ENCODE measurements at regions of chr3 and their contacts with region 1.

Region 1: DNA sequence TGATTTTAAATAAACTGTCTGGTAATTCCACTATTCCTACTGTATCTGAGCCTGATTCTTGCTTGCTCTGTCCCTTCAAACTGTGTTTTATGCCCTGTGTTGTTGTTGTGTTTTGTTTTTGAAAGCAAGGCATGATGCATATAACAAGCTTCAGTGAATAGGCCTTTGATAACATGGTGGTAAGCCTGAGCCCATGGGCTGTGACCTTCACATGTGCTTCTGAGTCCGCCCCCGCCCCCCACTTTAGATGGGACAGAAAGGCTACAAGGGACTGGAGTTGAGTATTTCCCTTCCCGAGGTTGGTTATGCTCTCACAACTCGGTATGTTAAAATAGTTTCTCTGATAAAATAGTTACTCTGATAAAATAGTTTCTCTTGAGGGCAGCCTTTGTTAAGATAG is 119.0 kb upstream of the WNT7A start:
- DNase-seq: no peak
- H3K4me3 ChIP-seq: no peak overlapping the region
- H3K27ac ChIP-seq: no peak overlapping the region
- H3K4me1 ChIP-seq: no peaks in the 10 kb centered on the region
- CTCF ChIP-seq: no peak

Region 2: DNA sequence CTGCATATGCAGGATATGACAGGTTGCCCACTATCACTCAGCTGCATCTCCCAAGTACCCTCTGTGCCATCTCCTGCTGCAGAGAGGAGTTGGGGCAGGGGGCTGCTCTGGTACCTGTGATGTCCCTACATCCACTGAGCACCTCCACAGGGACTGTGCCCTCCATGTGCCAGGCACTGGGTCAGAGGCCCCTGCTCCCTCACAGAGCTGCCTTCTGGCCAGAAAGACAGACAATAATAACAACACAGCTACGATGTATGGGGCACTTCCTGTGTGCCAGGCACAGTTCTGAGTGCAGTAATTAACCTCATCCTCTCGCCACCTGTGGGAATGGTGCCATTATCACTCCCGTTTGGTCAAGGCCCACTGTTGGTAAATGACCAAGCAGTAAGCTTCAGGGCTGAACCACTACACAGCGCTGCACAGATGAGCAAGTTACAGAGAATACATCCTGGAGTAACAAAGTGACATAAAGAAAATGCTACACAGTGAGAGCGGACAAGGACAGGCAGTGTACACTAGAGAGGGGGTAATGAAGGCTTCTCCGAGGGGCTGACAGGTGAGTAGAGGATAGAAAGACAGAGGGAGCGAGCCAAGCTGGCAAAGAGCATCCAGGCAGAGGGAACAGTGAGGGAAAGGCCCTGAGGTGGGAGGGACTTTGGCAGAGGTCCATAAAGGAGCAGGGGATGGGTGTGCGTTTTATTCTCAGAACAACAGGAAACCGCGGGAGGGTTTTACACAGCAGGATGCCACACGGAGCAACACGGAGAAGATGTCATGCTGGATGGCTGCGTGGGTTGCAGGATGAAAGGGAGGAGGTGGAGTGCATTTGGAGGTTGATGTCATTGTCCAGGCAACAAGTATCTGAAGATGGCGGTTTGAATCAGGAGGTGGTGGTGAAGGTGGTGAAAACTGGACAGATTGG is 132.5 kb before region 1 on chr3:
- CTCF ChIA-PET with region 1: no interaction called
- POLR2A ChIA-PET with region 1: no interaction called
- intact Hi-C with region 1: no loop called
- DNase-seq: no peak
- H3K4me3 ChIP-seq: no peak overlapping the region
- H3K27ac ChIP-seq: no peak overlapping the region
- H3K4me1 ChIP-seq: no peaks in the 10 kb centered on the region
- CTCF ChIP-seq: no peak

Region 3: DNA sequence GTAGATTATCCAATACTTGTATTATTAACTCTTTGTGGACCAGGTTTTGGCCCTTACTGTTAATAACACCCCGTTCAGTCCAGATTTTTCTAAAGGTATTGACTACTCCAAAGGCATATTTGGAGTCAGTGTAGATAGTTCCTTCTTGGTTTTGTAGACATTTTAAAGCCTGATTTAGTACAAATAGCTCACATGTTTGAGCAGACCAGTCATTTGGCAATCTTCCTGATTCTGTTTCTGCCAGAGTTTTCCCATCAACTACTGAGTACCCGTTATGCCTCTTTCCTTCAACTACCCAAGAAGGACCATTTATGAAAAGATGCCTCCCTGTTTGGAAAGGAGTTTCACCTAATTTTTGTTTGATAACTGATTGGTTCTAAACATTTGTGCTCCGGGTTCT is 43.8 kb after region 1 on chr3:
- CTCF ChIA-PET with region 1: no interaction called
- POLR2A ChIA-PET with region 1: no interaction called
- intact Hi-C with region 1: loop called (anchors 1 kb)
- DNase-seq: no peak
- H3K4me3 ChIP-seq: no peak overlapping the region
- H3K27ac ChIP-seq: no peak overlapping the region
- H3K4me1 ChIP-seq: no peaks in the 10 kb centered on the region
- CTCF ChIP-seq: no peak

Measured in OCI-LY7 (cell line).